Naive thymus-derived CD4-positive, alpha-beta T cell (primary cell): ENCODE measurements at regions of chr16 and their contacts with region 1.

Region 1: GRCh38 chr16:50681021-50681885 is at the start of gene SNX20:
- DNase-seq: peak in 8 of 9 donors; percentile 40 to 80 (median 75)
- ATAC-seq: peak; percentile 77
- H3K4me3 ChIP-seq: peak within 1 kb of the TSS; percentile 85
- H3K4me3 Mint-ChIP-seq: peak within 1 kb of the TSS; percentile 83 to 98 (median 93)
- H3K27ac ChIP-seq: peak within 1 kb of the TSS; percentile 90
- H3K27ac Mint-ChIP-seq: peak within 1 kb of the TSS; percentile 89 to 99 (median 97)
- H3K4me1 ChIP-seq: peaks cover 80 to 81% of the 10 kb centered on the region in 2 donors
- H3K4me1 Mint-ChIP-seq: peaks cover 68 to 94% (median 89%) of the 10 kb centered on the region in 7 donors
- H3K27me3 ChIP-seq: no peaks in the 10 kb centered on the region
- H3K27me3 Mint-ChIP-seq: no peaks in the 10 kb centered on the region
- total RNA-seq, gene SNX20: 32.4 to 94.9 (median 70.8) TPM

Region 2: DNA sequence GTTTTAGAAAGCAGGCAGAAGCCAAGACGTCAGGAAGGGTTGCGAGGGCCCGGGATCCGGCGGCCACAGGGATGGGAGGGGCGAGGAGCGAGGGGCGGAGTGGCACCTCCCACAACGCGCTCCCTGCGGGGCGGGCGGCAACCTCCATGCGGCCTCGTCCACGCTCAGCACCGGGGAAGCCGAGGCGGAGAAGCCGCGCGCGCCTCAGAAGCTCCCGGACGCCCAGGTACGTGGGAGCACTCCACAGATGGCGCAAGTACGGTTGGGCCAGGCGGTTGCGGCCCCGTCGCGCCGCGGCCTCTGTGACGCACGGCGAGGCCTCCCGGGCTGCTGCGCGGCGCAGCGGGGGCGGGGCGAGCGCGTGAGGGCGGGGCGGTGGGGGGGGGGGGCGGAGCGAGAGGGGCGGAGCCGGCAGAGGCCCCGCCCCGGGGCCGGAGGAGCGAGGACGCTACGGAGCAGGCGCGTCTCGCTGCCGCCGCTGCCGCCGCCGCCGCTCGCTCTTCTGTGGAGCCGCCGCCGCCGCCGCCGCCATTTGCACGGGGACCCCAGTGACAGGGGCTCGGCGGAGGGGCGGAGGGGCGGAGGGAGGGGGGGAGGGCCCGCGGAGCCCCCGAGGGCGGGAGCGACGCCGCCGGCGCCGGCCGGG is 528.3 kb before region 1 on chr16 and contains the start of gene TENT4B:
- CTCF ChIA-PET with region 1: no interaction called
- POLR2A ChIA-PET with region 1: no interaction called
- intact Hi-C with region 1: loop called in 1 of 2 experiments (anchors 5 kb)
- DNase-seq: peak; percentile 87 to 97 (median 96)
- ATAC-seq: peak; percentile 88
- H3K4me3 ChIP-seq: peak within 1 kb of the TSS; percentile 87
- H3K4me3 Mint-ChIP-seq: peak within 1 kb of the TSS; percentile 87 to 99 (median 94)
- H3K27ac ChIP-seq: peak within 1 kb of the TSS; percentile 99
- H3K27ac Mint-ChIP-seq: peak within 1 kb of the TSS; percentile 93 to 99 (median 97)
- H3K4me1 ChIP-seq: peaks cover 16 to 30% of the 10 kb centered on the region in 2 donors
- H3K4me1 Mint-ChIP-seq: peaks cover 28 to 44% (median 40%) of the 10 kb centered on the region in 7 donors
- H3K27me3 ChIP-seq: no peaks in the 10 kb centered on the region
- H3K27me3 Mint-ChIP-seq: no peaks in the 10 kb centered on the region
- total RNA-seq, gene TENT4B: 18.8 to 25.9 (median 23.8) TPM

Region 3: DNA sequence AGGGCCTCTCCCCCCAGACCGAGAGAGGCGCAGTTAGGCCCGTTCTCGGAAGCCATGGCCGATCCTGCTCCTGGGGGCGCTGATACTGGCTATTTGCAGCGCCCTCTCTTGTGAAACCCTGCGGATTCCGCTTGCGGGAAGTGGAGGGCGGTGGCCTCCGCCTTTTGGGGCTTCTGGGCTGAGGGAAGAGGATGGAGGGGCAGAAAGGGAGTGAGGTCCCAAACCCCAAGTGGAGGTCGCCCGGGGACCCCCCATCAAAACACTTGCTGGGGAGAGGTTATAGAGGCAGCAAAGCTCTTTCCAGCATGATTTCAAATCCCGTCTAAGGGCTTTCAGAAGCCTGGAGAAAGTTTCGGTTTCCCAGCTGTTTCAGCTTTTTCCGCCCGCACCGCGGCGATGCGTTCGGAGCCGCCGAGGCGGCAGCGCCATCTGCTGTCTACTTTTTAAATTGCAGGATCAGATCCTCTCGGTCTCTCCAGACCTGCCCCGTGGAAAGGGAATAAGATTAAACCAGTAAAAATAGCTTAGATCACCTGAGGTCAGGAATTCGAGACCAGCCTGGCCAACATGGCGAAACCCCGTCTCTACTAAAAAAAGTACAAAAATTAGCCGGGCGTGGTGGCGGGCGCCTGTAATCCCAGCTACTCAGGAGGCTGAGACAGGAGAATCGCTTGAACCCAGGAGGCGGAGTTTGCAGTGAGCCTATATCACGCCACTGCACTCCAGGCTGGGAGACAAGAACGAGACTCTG is 15.9 kb before region 1 on chr16:
- CTCF ChIA-PET with region 1: interaction called, 101 read pairs
- POLR2A ChIA-PET with region 1: interaction called, 42 read pairs
- intact Hi-C with region 1: loop called (anchors 1 kb)
- DNase-seq: peak; percentile 71 to 90 (median 77)
- ATAC-seq: peak; percentile 80
- H3K4me3 ChIP-seq: peak overlapping the region; percentile 60
- H3K4me3 Mint-ChIP-seq: peak overlapping the region; percentile 73 to 87 (median 84)
- H3K27ac ChIP-seq: peak overlapping the region; percentile 62
- H3K27ac Mint-ChIP-seq: peak overlapping the region; percentile 82 to 97 (median 89)
- H3K4me1 ChIP-seq: peaks cover 17% of the 10 kb centered on the region in 2 donors
- H3K4me1 Mint-ChIP-seq: peaks cover 28 to 49% (median 44%) of the 10 kb centered on the region in 7 donors
- H3K27me3 ChIP-seq: no peaks in the 10 kb centered on the region
- H3K27me3 Mint-ChIP-seq: no peaks in the 10 kb centered on the region

Region 4: GRCh38 chr16:50719518-50720337 is 38.5 kb after region 1 on chr16:
- CTCF ChIA-PET with region 1: interaction called, 4 read pairs
- POLR2A ChIA-PET with region 1: interaction called, 18 read pairs
- intact Hi-C with region 1: no loop called
- DNase-seq: peak in 3 of 9 donors; percentile 31 to 40 (median 35)
- ATAC-seq: peak; percentile 38
- H3K4me3 ChIP-seq: no peak overlapping the region
- H3K4me3 Mint-ChIP-seq: peak overlapping the region in 4 of 10 donors; percentile 18 to 71 (median 41)
- H3K27ac ChIP-seq: no peak overlapping the region
- H3K27ac Mint-ChIP-seq: peak overlapping the region in 6 of 9 donors; percentile 41 to 71 (median 54)
- H3K4me1 ChIP-seq: peaks cover 16 to 22% of the 10 kb centered on the region in 2 donors
- H3K4me1 Mint-ChIP-seq: peaks cover 34 to 54% (median 42%) of the 10 kb centered on the region in 7 donors
- H3K27me3 ChIP-seq: no peaks in the 10 kb centered on the region
- H3K27me3 Mint-ChIP-seq: no peaks in the 10 kb centered on the region

Region 5: GRCh38 chr16:50741808-50742575 is 60.7 kb after region 1 on chr16 and contains the start of gene CYLD:
- CTCF ChIA-PET with region 1: interaction called, 55 read pairs
- POLR2A ChIA-PET with region 1: interaction called, 50 read pairs
- intact Hi-C with region 1: loop called (anchors 1 kb)
- DNase-seq: peak; percentile 95 to 100 (median 100)
- ATAC-seq: peak; percentile 94
- H3K4me3 ChIP-seq: peak within 1 kb of the TSS; percentile 70
- H3K4me3 Mint-ChIP-seq: peak within 1 kb of the TSS; percentile 90 to 100 (median 96)
- H3K27ac ChIP-seq: peak within 1 kb of the TSS; percentile 100
- H3K27ac Mint-ChIP-seq: peak within 1 kb of the TSS; percentile 94 to 99 (median 98)
- H3K4me1 ChIP-seq: peaks cover 7 to 38% of the 10 kb centered on the region in 2 donors
- H3K4me1 Mint-ChIP-seq: peaks cover 28 to 52% (median 40%) of the 10 kb centered on the region in 7 donors
- H3K27me3 ChIP-seq: no peaks in the 10 kb centered on the region
- H3K27me3 Mint-ChIP-seq: no peaks in the 10 kb centered on the region
- total RNA-seq, gene CYLD: 259 to 393 (median 336) TPM